ENCODE measurements at regions of chr5 and their contacts with region 1.

Region 1: GRCh38 chr5:175895215-175896102 is 24.1 kb downstream of the CPLX2 start:
- DNase-seq: peak; percentile 25
- ATAC-seq: peak; percentile 95
- H3K4me3 Mint-ChIP-seq: peak overlapping the region; percentile 74
- H3K27ac Mint-ChIP-seq: peak overlapping the region; percentile 63
- H3K4me1 Mint-ChIP-seq: peaks cover 28% of the 10 kb centered on the region
- H3K27me3 Mint-ChIP-seq: peaks cover 24% of the 10 kb centered on the region
- CTCF ChIP-seq: no peak

Region 2: GRCh38 chr5:175300109-175300508 is 595.4 kb before region 1 on chr5:
- CTCF ChIA-PET with region 1: no interaction called
- POLR2A ChIA-PET with region 1: no interaction called
- intact Hi-C with region 1: no loop called
- DNase-seq: no peak
- ATAC-seq: no peak
- H3K4me3 Mint-ChIP-seq: no peak overlapping the region
- H3K27ac Mint-ChIP-seq: no peak overlapping the region
- H3K4me1 Mint-ChIP-seq: no peaks in the 10 kb centered on the region
- H3K27me3 Mint-ChIP-seq: no peaks in the 10 kb centered on the region
- CTCF ChIP-seq: no peak

Region 3: GRCh38 chr5:175478384-175479124 is 416.9 kb before region 1 on chr5 and contains the start of gene SFXN1:
- CTCF ChIA-PET with region 1: no interaction called
- POLR2A ChIA-PET with region 1: no interaction called
- intact Hi-C with region 1: loop called (anchors 10 kb)
- DNase-seq: peak; percentile 76
- ATAC-seq: peak; percentile 88
- H3K4me3 Mint-ChIP-seq: peak within 1 kb of the TSS; percentile 93
- H3K27ac Mint-ChIP-seq: peak within 1 kb of the TSS; percentile 78
- H3K4me1 Mint-ChIP-seq: peaks cover 29% of the 10 kb centered on the region
- H3K27me3 Mint-ChIP-seq: peaks cover 10% of the 10 kb centered on the region
- CTCF ChIP-seq: no peak
- total RNA-seq, gene SFXN1: 40.2 and 46.9 TPM in 2 replicates

Region 4: GRCh38 chr5:175796536-175797499 is 98.6 kb before region 1 on chr5:
- CTCF ChIA-PET with region 1: no interaction called
- POLR2A ChIA-PET with region 1: no interaction called
- intact Hi-C with region 1: loop called (anchors 10 kb)
- DNase-seq: peak; percentile 31
- ATAC-seq: peak; percentile 73
- H3K4me3 Mint-ChIP-seq: no peak overlapping the region
- H3K27ac Mint-ChIP-seq: no peak overlapping the region
- H3K4me1 Mint-ChIP-seq: peaks cover 8% of the 10 kb centered on the region
- H3K27me3 Mint-ChIP-seq: peaks cover 64% of the 10 kb centered on the region
- CTCF ChIP-seq: no peak

Region 5: DNA sequence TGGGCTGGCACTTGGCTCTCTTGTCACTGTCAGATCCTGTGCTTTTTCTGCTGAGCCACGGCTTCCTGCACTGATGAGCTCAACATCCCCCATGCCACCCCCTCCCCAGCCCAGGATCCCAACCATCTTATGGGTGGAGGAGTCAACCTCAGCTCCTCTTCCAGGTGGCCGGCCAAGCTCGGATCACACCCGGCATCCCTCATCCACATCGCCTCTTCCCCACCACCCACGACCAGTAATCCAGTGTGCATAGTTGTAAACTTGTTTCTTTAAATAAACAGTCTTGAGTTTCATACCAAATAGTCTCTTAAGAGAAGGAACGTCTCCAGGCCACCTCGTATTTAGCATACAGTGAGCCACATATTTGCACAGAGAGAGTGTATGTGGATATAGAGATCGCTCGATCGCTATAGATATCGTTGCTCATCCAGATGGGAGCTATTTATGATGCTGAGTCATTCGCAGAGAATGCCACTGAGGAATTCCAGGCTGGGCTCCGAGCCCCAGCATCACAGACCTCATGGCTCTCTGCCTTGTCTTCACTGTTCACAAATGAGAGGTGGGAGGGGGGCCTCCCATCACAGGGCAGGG is 85.8 kb before region 1 on chr5:
- CTCF ChIA-PET with region 1: no interaction called
- POLR2A ChIA-PET with region 1: no interaction called
- intact Hi-C with region 1: no loop called
- DNase-seq: no peak
- ATAC-seq: no peak
- H3K4me3 Mint-ChIP-seq: no peak overlapping the region
- H3K27ac Mint-ChIP-seq: no peak overlapping the region
- H3K4me1 Mint-ChIP-seq: no peaks in the 10 kb centered on the region
- H3K27me3 Mint-ChIP-seq: peaks cover 26% of the 10 kb centered on the region
- CTCF ChIP-seq: no peak

Region 6: DNA sequence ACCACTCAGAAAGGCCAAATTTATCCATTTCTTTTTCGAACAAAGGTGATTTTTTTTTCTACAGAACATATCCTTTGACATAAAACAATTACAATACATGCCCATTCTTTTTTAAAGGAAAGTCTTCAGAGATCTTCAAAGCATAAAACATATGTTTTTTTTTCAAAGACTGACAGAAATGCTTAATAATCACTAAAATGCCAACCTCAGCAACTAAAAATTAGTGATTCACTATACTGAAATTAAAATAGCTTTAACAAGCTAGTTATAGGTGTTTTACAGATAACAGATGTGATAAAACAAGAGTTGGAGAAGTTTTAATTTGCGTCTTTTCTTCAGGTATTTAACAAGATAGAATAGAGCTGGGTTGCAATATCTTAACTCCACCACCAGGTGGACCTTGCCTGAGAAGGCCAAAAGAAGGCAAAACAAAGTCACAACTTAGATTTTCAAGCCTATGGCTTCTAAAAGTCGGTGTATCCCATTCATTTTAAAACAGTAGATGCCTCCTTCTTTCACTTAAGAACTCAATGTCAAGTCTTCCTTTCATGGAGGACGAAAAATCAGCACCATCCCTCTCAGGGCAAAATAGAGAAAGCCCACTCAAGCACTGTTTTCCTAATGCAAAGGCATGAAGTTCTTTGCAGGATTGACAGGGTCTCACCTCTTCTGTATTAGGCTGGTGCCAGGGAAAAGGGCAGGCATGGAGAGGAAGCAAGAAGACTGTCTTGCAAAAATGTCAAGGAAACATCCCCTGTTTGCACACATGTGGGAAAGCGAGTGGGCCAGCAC is 55.2 kb before region 1 on chr5:
- CTCF ChIA-PET with region 1: no interaction called
- POLR2A ChIA-PET with region 1: no interaction called
- intact Hi-C with region 1: loop called (anchors 2 kb)
- DNase-seq: no peak
- ATAC-seq: no peak
- H3K4me3 Mint-ChIP-seq: no peak overlapping the region
- H3K27ac Mint-ChIP-seq: no peak overlapping the region
- H3K4me1 Mint-ChIP-seq: no peaks in the 10 kb centered on the region
- H3K27me3 Mint-ChIP-seq: peaks cover 5% of the 10 kb centered on the region
- CTCF ChIP-seq: no peak